Natural killer cell (primary cell): ENCODE measurements at regions of chr3 and their contacts with region 1.

Region 1: DNA sequence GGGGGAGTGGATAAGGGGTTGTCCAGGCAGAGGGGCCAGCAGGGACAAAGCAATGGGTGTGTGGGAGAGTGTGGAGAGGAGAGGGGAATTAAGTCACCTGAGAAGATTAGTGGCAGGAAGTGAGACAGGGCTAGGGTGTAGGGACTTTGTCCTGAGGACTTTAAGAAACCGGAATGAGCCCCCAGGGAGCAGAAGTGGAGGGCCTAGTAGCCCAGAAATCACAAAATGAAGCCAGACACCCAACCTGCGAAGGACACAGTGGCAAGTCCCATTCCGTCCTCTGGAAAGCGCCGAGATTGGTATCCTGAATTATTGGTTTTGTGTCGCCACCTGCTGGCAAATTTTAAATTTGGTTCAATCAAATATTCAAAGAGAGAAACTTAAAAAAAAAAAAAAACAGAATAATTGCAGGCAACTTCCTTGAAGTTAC is 78.0 kb upstream of the SLC25A36 start:
- DNase-seq: peak in 1 of 2 donors; percentile 62
- ATAC-seq: no peak
- H3K4me3 ChIP-seq: no peak overlapping the region
- H3K4me3 Mint-ChIP-seq: no peak overlapping the region
- H3K27ac ChIP-seq: no peak overlapping the region
- H3K27ac Mint-ChIP-seq: no peak overlapping the region
- H3K4me1 ChIP-seq: peaks cover 3% of the 10 kb centered on the region
- H3K4me1 Mint-ChIP-seq: peaks cover 0 to 4% of the 10 kb centered on the region in 2 donors
- H3K27me3 ChIP-seq: no peaks in the 10 kb centered on the region
- H3K27me3 Mint-ChIP-seq: peaks cover 5 to 30% of the 10 kb centered on the region in 2 donors
- CTCF ChIP-seq: peak; percentile 55

Region 2: DNA sequence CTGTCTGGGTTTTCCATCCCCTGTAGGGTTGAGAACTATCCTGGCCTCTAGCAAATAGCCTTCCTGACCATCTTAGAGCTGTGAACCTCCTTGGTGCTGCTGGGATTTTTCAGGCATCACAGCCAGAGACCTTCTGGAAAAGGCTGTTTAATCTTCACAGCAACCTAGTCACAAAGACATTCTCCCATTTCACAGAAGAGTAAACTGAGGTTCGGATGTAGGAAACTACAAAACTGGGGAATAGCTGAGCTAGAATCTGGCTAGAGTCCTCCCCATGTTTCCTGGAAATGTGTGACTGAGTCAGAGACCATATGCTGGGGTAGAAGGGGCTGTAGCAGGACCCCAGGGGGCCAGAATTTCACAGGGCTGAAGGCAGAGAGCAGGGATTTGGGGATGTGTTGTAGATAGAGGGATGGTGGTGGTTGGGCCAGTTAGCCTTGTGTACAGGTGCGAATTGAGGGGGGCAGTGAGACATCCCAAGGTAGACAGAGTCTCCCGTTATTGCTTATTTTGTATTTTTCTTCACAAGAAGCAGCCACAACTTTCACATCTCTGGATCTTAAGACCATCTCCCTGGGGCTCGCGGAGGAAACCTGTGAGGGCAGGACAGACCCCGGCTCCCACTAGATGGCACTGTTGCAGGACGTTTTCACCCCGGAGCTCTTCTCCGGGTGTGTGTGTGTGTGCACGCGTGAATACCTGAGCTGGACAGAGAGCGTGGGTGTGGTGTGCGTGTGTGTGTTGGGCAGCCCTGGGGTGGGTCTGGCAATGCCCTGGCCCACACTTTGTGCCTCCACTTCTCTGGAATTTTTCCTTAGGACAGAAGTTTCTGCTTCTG is 1752.0 kb before region 1 on chr3:
- intact Hi-C with region 1: loop called (anchors 10 kb)
- DNase-seq: peak; percentile 34 to 66
- ATAC-seq: peak; percentile 52 to 75 (median 68)
- H3K4me3 ChIP-seq: no peak overlapping the region
- H3K4me3 Mint-ChIP-seq: no peak overlapping the region
- H3K27ac ChIP-seq: no peak overlapping the region
- H3K27ac Mint-ChIP-seq: no peak overlapping the region
- H3K4me1 ChIP-seq: peaks cover 5% of the 10 kb centered on the region
- H3K4me1 Mint-ChIP-seq: peaks cover 9 to 24% of the 10 kb centered on the region in 2 donors
- H3K27me3 ChIP-seq: no peaks in the 10 kb centered on the region
- H3K27me3 Mint-ChIP-seq: peaks cover 0 to 4% of the 10 kb centered on the region in 2 donors
- CTCF ChIP-seq: peak; percentile 36